Thyroid gland (tissue), 4 donors: ENCODE measurements at regions of chr17 and their contacts with region 1.

Region 1: GRCh38 chr17:78176548-78177025 is 8.2 kb downstream of the SYNGR2 start:
- DNase-seq: peak; percentile 68 to 76
- H3K4me3 ChIP-seq: no peak overlapping the region
- H3K27ac ChIP-seq: no peak overlapping the region
- H3K4me1 ChIP-seq: peaks cover 19 to 39% of the 10 kb centered on the region in 2 donors
- H3K27me3 ChIP-seq: no peaks in the 10 kb centered on the region
- CTCF ChIP-seq: peak; percentile 61 to 92 (median 72)
- POLR2A ChIP-seq: no peak

Region 2: GRCh38 chr17:78075545-78075944 is 101.0 kb before region 1 on chr17:
- intact Hi-C with region 1: no loop called
- DNase-seq: no peak
- H3K4me3 ChIP-seq: no peak overlapping the region
- H3K27ac ChIP-seq: no peak overlapping the region
- H3K4me1 ChIP-seq: no peaks in the 10 kb centered on the region
- H3K27me3 ChIP-seq: no peaks in the 10 kb centered on the region
- CTCF ChIP-seq: no peak
- POLR2A ChIP-seq: no peak

Region 3: GRCh38 chr17:78112518-78113226 is 63.9 kb before region 1 on chr17:
- intact Hi-C with region 1: loop called (anchors 2 kb)
- DNase-seq: peak; percentile 69
- H3K4me3 ChIP-seq: no peak overlapping the region
- H3K27ac ChIP-seq: no peak overlapping the region
- H3K4me1 ChIP-seq: peaks cover 7 to 24% of the 10 kb centered on the region in 2 donors
- H3K27me3 ChIP-seq: no peaks in the 10 kb centered on the region
- CTCF ChIP-seq: peak; percentile 92 to 99 (median 97)
- POLR2A ChIP-seq: no peak

Region 4: GRCh38 chr17:78128551-78129350 is 47.8 kb before region 1 on chr17 and contains the start of gene TMC6:
- intact Hi-C with region 1: loop called (anchors 5 kb)
- DNase-seq: peak; percentile 56 to 69
- H3K4me3 ChIP-seq: peak within 1 kb of the TSS; percentile 47 to 70 (median 66)
- H3K27ac ChIP-seq: peak within 1 kb of the TSS; percentile 39 to 75 (median 63)
- H3K4me1 ChIP-seq: peaks cover 26 to 60% of the 10 kb centered on the region in 2 donors
- H3K27me3 ChIP-seq: no peaks in the 10 kb centered on the region
- CTCF ChIP-seq: peak in 1 of 6 experiments; percentile 4
- POLR2A ChIP-seq: peak in 1 of 2 donors; percentile 37
- total RNA-seq, gene TMC6: 10.0 to 22.8 (median 20.4) TPM

Region 5: GRCh38 chr17:78250891-78251794 is 74.6 kb after region 1 on chr17:
- intact Hi-C with region 1: loop called (anchors 5 kb)
- DNase-seq: peak; percentile 83 to 88
- H3K4me3 ChIP-seq: no peak overlapping the region
- H3K27ac ChIP-seq: peak overlapping the region in 1 of 3 donors; percentile 39
- H3K4me1 ChIP-seq: peaks cover 0 to 24% of the 10 kb centered on the region in 2 donors
- H3K27me3 ChIP-seq: no peaks in the 10 kb centered on the region
- CTCF ChIP-seq: peak in 5 of 6 experiments; percentile 97 to 100 (median 99)
- POLR2A ChIP-seq: no peak